AG04450 (cell line): ENCODE measurements at regions of chr2 and their contacts with region 1.

Region 1: DNA sequence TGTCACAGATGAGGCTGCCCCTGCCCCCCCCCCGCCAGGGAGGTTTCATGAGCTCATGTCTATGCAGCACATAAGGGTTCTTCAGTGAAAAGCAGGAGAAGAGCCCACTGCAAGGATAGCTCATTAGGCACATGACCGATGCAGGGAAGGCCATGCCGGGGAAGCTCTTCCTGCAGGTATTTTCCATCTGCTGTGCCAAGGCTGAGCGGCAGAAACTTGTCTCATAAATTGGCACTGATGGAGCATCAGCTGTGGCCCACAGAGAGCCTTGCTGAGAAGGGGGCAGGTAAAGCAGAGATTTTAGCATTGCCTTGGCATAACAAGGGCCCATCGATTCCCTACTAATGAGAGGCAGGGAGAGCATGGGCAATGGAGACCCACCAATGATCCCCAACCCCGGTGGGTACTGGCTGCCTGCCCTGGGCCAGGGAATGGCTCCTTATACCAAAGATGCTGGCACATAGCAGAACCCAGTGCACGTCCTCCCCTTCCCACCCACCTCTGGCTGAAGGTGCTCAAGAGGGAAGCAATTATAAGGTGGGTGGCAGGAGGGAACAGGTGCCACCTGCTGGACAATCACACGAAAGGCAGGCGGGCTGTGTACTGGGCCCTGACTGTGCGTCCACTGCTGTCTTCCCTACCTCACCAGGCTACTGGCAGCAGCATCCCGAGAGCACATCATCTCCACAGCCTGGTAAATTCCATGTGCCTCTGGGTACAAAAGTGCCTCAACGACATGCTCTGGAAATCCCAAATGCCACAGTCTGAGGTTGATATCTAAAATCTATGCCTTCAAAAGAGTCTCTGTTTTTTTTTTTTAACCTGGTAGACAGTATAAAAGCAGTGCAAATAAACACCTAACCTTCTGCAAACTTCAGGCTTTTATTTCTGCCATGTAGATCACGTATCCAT is 41.4 kb downstream of the STEAP3 start:
- DNase-seq: no peak
- H3K4me3 ChIP-seq: no peak overlapping the region
- H3K27ac ChIP-seq: no peak overlapping the region
- H3K27me3 ChIP-seq: no peaks in the 10 kb centered on the region
- CTCF ChIP-seq: peak; percentile 88

Region 2: DNA sequence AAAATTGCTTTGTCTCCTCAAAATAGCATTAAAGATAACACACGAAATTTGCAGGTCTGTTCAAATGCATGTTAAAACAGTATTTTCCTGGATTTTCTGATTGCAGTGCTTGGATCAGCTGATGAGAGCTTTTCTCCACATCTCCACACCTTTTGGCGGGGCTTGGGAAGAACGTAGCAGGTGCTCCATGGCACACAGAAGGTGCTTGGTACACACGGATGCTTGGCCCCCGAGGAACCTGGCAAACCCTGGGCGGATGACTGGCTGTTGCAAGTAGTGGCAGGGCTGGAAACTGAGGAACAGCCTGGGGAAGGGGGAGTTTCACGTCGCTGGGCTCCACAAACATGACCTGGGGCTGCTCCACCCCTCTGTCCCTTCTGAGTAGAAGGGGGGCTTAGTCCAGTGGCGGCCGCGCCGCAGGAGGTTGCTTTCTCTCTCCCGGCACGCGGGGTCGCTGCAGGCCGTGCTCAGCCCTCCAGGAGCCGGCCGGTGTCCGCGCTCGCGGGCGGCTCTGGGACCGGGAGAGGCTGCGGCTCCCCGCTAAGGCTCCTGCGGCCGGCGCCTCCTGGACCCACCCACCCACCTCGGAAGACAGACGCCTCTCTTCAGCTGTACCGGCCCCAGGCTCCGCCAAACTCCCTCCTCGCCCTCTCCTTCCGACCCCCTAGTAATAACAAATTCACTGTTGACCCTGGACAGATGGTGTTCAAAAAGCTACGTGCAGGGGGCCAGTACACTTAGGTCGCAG is 253.7 kb before region 1 on chr2:
- CTCF ChIA-PET with region 1: interaction called, 18 read pairs
- POLR2A ChIA-PET with region 1: no interaction called
- DNase-seq: no peak
- H3K4me3 ChIP-seq: no peak overlapping the region
- H3K27ac ChIP-seq: no peak overlapping the region
- H3K27me3 ChIP-seq: peaks cover 4% of the 10 kb centered on the region
- CTCF ChIP-seq: peak; percentile 53

Region 3: GRCh38 chr2:119028327-119029174 is 236.5 kb before region 1 on chr2:
- CTCF ChIA-PET with region 1: interaction called, 10 read pairs
- POLR2A ChIA-PET with region 1: no interaction called
- DNase-seq: peak; percentile 7
- H3K4me3 ChIP-seq: no peak overlapping the region
- H3K27ac ChIP-seq: no peak overlapping the region
- H3K27me3 ChIP-seq: peaks cover 2% of the 10 kb centered on the region
- CTCF ChIP-seq: peak; percentile 66

Region 4: DNA sequence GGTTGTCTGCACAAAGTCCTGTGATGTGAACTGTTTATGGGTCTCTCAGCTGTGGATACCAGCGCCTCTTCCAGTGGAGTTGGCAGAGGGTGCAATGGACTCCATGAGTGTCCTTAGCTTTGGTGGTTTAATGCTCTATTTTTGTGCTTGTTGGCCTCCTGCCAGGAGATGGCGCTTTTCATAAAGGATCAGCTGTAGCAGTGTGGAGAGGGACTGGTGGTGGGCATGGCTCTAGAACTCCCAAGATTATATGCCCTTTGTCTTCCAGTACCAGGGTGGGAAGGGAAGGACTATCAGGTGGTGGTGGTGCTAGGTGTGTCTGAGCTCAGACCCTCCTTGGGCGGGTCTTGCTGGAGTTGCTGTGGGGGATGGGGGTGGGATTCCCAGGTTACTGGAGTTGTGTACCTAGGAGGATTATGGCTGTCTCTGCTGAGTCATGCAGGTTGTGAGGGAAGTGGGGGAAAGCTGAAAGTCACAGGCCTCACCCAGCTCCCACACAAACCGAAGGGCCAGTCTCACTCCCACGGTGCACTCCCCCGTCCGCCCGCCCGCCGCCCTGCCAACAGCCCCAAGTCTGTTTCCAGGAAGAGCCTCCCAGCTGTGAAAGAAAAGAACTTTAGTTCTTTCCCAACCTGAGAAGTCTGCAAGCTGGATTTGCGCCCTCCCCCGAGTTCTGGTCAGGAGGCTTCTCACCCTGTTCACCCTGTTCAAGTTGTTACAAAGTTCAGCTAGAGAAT is 214.9 kb before region 1 on chr2:
- CTCF ChIA-PET with region 1: no interaction called
- POLR2A ChIA-PET with region 1: no interaction called
- DNase-seq: no peak
- H3K4me3 ChIP-seq: no peak overlapping the region
- H3K27ac ChIP-seq: no peak overlapping the region
- H3K27me3 ChIP-seq: no peaks in the 10 kb centered on the region
- CTCF ChIP-seq: no peak

Region 5: DNA sequence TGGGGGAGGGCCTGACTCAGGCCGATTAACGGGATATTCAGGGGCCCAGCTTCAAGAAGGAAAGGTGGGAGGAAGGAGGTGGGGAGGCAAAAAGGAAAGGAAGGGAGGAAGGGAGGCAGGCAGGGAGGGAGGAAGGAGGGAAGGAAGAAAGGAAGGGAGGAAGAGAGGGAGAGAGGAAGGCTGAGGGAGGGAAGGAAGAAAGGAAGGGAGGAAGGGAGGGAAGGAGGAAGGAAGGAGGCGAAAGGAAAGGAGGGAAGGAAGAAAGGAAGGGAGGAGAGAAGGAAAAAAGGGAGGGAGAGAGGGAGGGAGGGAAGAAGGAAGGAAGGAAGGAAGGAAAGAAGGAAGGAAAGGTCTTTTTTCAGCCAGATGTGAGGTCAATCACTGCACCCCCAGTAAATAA is 191.8 kb before region 1 on chr2:
- CTCF ChIA-PET with region 1: interaction called, 12 read pairs
- POLR2A ChIA-PET with region 1: no interaction called
- DNase-seq: no peak
- H3K4me3 ChIP-seq: no peak overlapping the region
- H3K27ac ChIP-seq: no peak overlapping the region
- H3K27me3 ChIP-seq: no peaks in the 10 kb centered on the region
- CTCF ChIP-seq: no peak

Region 6: DNA sequence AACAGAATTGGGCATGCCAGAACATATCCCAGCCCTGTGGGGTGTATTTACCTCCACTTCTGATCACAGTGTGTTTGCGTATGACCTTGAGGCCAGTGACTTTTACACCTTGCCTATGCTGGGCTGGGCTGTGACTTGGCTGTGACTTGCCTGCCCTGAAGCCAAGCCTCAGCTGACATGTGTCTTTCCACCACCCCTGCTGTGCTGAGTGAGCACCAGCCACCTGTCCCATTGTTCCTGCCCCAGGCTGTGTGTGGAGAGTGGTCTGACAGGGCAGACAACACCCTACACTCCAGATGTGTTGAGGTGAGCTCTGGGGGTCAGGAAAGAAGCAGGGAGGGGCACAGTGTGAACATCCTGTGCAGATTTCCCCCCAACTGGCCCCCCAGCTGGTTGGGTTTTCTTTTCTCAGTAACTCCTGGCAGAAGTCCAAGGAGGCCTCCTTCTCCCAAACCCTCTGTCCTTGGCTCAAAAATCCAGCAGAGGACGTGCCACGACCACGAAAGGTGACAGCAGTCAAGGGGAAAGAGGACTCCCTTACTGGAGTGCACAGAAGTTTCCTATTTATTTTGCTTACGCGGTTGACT is 46.5 kb before region 1 on chr2:
- CTCF ChIA-PET with region 1: interaction called, 43 read pairs
- POLR2A ChIA-PET with region 1: no interaction called
- DNase-seq: peak; percentile 48
- H3K4me3 ChIP-seq: no peak overlapping the region
- H3K27ac ChIP-seq: no peak overlapping the region
- H3K27me3 ChIP-seq: peaks cover 4% of the 10 kb centered on the region
- CTCF ChIP-seq: peak; percentile 62

Region 7: GRCh38 chr2:119311356-119311755 is 46.3 kb after region 1 on chr2:
- CTCF ChIA-PET with region 1: no interaction called
- POLR2A ChIA-PET with region 1: no interaction called
- DNase-seq: no peak
- H3K4me3 ChIP-seq: no peak overlapping the region
- H3K27ac ChIP-seq: no peak overlapping the region
- H3K27me3 ChIP-seq: no peaks in the 10 kb centered on the region
- CTCF ChIP-seq: no peak